ENCODE measurements at regions of chr17 and their contacts with region 1.

Region 1: GRCh38 chr17:44170499-44171201 is at the start of gene ASB16:
- DNase-seq: no peak
- ATAC-seq: no peak
- H3K4me3 ChIP-seq: no peak within 1 kb of the TSS
- H3K27ac ChIP-seq: no peak within 1 kb of the TSS
- H3K4me1 ChIP-seq: peaks cover 5% of the 10 kb centered on the region
- H3K27me3 ChIP-seq: no peaks in the 10 kb centered on the region
- CTCF ChIP-seq: no peak
- EP300 ChIP-seq: no peak
- POLR2A ChIP-seq: 0 out of 2 replicates have a peak, but pooled peaks have one; percentile 18
- RAD21 ChIP-seq: no peak
- polyA plus RNA-seq, gene ASB16: 0.07 TPM in 1 of 2 experiments, not detected in the other

Region 2: GRCh38 chr17:43946069-43946696 is 224.5 kb before region 1 on chr17:
- CTCF ChIA-PET with region 1: interaction called, 56 read pairs
- POLR2A ChIA-PET with region 1: interaction called, 10 read pairs
- RAD21 ChIA-PET with region 1: interaction called, 28 read pairs
- SMC1A ChIA-PET with region 1: interaction called, 19 read pairs
- in situ Hi-C with region 1: loop called (anchors 5 kb)
- intact Hi-C with region 1: loop called (anchors 2 kb)
- DNase-seq: no peak
- ATAC-seq: no peak
- H3K4me3 ChIP-seq: no peak overlapping the region
- H3K27ac ChIP-seq: no peak overlapping the region
- H3K4me1 ChIP-seq: 0 out of 2 replicates have a peak, but pooled peaks cover 4% of the 10 kb centered on the region
- H3K27me3 ChIP-seq: peaks cover 0 to 2% of the 10 kb centered on the region in 2 experiments; a peak in 1 of 4 replicates
- CTCF ChIP-seq: no peak
- EP300 ChIP-seq: no peak
- POLR2A ChIP-seq: no peak
- RAD21 ChIP-seq: no peak

Region 3: GRCh38 chr17:44006598-44007345 is 163.9 kb before region 1 on chr17:
- CTCF ChIA-PET with region 1: interaction called, 13 read pairs
- POLR2A ChIA-PET with region 1: no interaction called
- RAD21 ChIA-PET with region 1: no interaction called
- SMC1A ChIA-PET with region 1: no interaction called
- in situ Hi-C with region 1: no loop called
- intact Hi-C with region 1: no loop called
- DNase-seq: peak; percentile 73
- ATAC-seq: peak; percentile 93
- H3K4me3 ChIP-seq: peak overlapping the region; percentile 91
- H3K27ac ChIP-seq: no peak overlapping the region
- H3K4me1 ChIP-seq: peaks cover 14% of the 10 kb centered on the region
- H3K27me3 ChIP-seq: peaks cover 10% of the 10 kb centered on the region in 2 experiments
- CTCF ChIP-seq: peak; percentile 40 to 72 (median 53)
- EP300 ChIP-seq: no peak
- POLR2A ChIP-seq: peak; percentile 8; the same call in 1 of the 2 replicates
- RAD21 ChIP-seq: peak; percentile 29; the same call in 1 of the 2 replicates

Region 4: GRCh38 chr17:44123356-44124117 is 47.1 kb before region 1 on chr17 and contains the start of gene HDAC5:
- CTCF ChIA-PET with region 1: interaction called, 13 read pairs
- POLR2A ChIA-PET with region 1: interaction called, 4 read pairs
- RAD21 ChIA-PET with region 1: interaction called, 7 read pairs
- SMC1A ChIA-PET with region 1: interaction called, 5 read pairs
- in situ Hi-C with region 1: no loop called
- intact Hi-C with region 1: no loop called
- DNase-seq: peak; percentile 73
- ATAC-seq: peak; percentile 97
- H3K4me3 ChIP-seq: peak within 1 kb of the TSS; percentile 95
- H3K27ac ChIP-seq: peak within 1 kb of the TSS; percentile 59
- H3K4me1 ChIP-seq: peaks cover 8% of the 10 kb centered on the region; the same call in 1 of the 2 replicates
- H3K27me3 ChIP-seq: no peaks in the 10 kb centered on the region
- CTCF ChIP-seq: peak; percentile 53 to 69 (median 67)
- EP300 ChIP-seq: no peak
- POLR2A ChIP-seq: peak; percentile 71
- RAD21 ChIP-seq: peak; percentile 38; the same call in 1 of the 2 replicates
- polyA plus RNA-seq, gene HDAC5: 1.1 to 2.0 TPM

Region 5: GRCh38 chr17:44141717-44142285 is 28.8 kb before region 1 on chr17 and contains the start of gene HROB:
- CTCF ChIA-PET with region 1: interaction called, 13 read pairs
- POLR2A ChIA-PET with region 1: no interaction called
- RAD21 ChIA-PET with region 1: interaction called, 8 read pairs
- SMC1A ChIA-PET with region 1: interaction called, 3 read pairs
- in situ Hi-C with region 1: no loop called
- intact Hi-C with region 1: loop called (anchors 1 kb)
- DNase-seq: peak; percentile 87
- ATAC-seq: peak; percentile 94
- H3K4me3 ChIP-seq: peak within 1 kb of the TSS; percentile 85
- H3K27ac ChIP-seq: peak within 1 kb of the TSS; percentile 91
- H3K4me1 ChIP-seq: peaks cover 15% of the 10 kb centered on the region
- H3K27me3 ChIP-seq: no peaks in the 10 kb centered on the region
- CTCF ChIP-seq: peak; percentile 92 to 95 (median 94); a peak in 5 of 6 replicates
- EP300 ChIP-seq: no peak
- POLR2A ChIP-seq: peak; percentile 49; the same call in 1 of the 2 replicates
- RAD21 ChIP-seq: peak; percentile 54
- polyA plus RNA-seq, gene HROB: 4.0 to 4.7 TPM

Region 6: GRCh38 chr17:44186307-44187130 is 15.9 kb after region 1 on chr17 and contains the start of gene TMUB2:
- CTCF ChIA-PET with region 1: interaction called, 12 read pairs
- POLR2A ChIA-PET with region 1: no interaction called
- RAD21 ChIA-PET with region 1: interaction called, 6 read pairs
- SMC1A ChIA-PET with region 1: interaction called, 4 read pairs
- in situ Hi-C with region 1: no loop called
- intact Hi-C with region 1: no loop called
- DNase-seq: peak; percentile 98
- ATAC-seq: peak; percentile 88
- H3K4me3 ChIP-seq: peak within 1 kb of the TSS; percentile 97
- H3K27ac ChIP-seq: peak within 1 kb of the TSS; percentile 97
- H3K4me1 ChIP-seq: peaks cover 4% of the 10 kb centered on the region
- H3K27me3 ChIP-seq: no peaks in the 10 kb centered on the region
- CTCF ChIP-seq: no peak
- EP300 ChIP-seq: no peak
- POLR2A ChIP-seq: peak; percentile 94
- RAD21 ChIP-seq: no peak
- polyA plus RNA-seq, gene TMUB2: 4.3 to 5.9 TPM